B cell (primary cell): ENCODE measurements at regions of chr19 and their contacts with region 1.

Region 1: DNA sequence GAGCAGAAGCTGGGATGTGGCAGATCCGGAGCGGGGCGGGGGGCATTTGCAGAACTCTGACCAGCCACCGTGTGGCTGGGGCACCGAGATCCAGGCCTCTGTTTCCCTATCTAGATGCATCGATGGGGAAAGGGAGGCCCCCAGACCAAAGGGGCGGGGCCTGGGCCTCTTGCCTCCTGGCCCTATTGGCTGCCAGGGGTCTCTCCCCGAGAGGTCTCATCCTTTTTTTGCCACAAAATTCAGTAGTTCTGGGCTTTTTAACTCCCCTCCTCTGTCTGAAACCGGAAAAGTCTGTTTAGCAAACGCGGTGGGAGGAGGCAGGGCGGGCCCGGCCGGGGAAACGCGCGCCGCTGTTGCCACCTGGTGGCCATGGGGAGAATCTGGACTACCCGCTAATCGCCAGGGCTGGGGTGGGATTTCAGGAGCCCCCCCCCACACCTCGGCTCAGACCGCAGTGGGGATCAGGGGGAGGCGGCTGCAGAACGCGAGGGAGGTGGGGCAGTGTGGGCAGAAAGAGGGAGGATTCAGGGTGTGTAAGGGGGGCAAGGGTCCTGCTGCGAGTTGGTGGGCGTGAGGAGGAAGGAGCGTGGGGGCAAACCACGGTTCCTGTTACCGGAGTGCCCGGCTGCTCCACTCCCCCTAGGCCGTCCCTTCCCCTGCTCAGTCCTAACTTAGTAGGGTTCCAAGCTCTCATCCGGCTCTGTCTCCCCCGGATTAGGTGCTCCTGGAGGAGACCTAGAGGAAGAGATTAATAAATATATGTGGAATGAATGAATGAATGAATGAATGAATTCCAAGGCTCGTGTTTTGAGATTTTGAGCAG is 28.3 kb downstream of the IL12RB1 start:
- DNase-seq: peak; percentile 90
- ATAC-seq: peak; percentile 96
- H3K4me3 ChIP-seq: peak overlapping the region in 3 of 5 experiments; percentile 21 to 23 (median 23)
- H3K4me3 Mint-ChIP-seq: peak overlapping the region; percentile 65
- H3K27ac ChIP-seq: peak overlapping the region; percentile 67 to 71
- H3K27ac Mint-ChIP-seq: peak overlapping the region; percentile 89
- H3K4me1 ChIP-seq: peaks cover 11 to 13% of the 10 kb centered on the region in 2 donors
- H3K4me1 Mint-ChIP-seq: peaks cover 20% of the 10 kb centered on the region
- H3K27me3 ChIP-seq: no peaks in the 10 kb centered on the region
- H3K27me3 Mint-ChIP-seq: no peaks in the 10 kb centered on the region
- CTCF ChIP-seq: peak; percentile 96

Region 2: GRCh38 chr19:17938092-17938845 is 120.2 kb before region 1 on chr19:
- CTCF ChIA-PET with region 1: interaction called, 33 read pairs
- POLR2A ChIA-PET with region 1: interaction called, 4 read pairs
- intact Hi-C with region 1: loop called (anchors 1 kb)
- DNase-seq: peak; percentile 88
- ATAC-seq: peak; percentile 98
- H3K4me3 ChIP-seq: no peak overlapping the region
- H3K4me3 Mint-ChIP-seq: no peak overlapping the region
- H3K27ac ChIP-seq: no peak overlapping the region
- H3K27ac Mint-ChIP-seq: peak overlapping the region; percentile 41
- H3K4me1 ChIP-seq: peaks cover 5 to 10% of the 10 kb centered on the region in 2 donors
- H3K4me1 Mint-ChIP-seq: peaks cover 11% of the 10 kb centered on the region
- H3K27me3 ChIP-seq: no peaks in the 10 kb centered on the region
- H3K27me3 Mint-ChIP-seq: no peaks in the 10 kb centered on the region
- CTCF ChIP-seq: peak; percentile 94

Region 3: DNA sequence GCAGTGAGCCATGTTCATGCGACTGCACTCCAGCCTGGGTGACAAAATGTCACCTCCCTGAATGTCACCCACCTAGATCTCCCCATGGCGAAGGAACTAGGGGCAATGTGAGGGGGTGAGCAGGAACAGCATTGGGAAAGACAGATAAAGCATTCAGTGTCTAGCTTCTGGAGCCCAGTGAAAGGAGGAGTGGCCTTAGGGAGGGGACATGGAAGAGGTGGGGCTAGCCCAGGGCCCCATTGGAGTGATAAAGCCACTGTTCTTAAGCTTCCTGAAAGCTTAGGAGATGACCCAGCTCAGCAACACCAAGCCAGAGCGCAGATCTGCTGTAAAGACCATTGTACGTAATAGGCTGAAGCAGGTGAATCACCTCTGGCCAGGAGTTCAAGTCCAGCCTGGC is 104.5 kb before region 1 on chr19:
- CTCF ChIA-PET with region 1: no interaction called
- POLR2A ChIA-PET with region 1: no interaction called
- intact Hi-C with region 1: no loop called
- DNase-seq: no peak
- ATAC-seq: no peak
- H3K4me3 ChIP-seq: no peak overlapping the region
- H3K4me3 Mint-ChIP-seq: no peak overlapping the region
- H3K27ac ChIP-seq: no peak overlapping the region
- H3K27ac Mint-ChIP-seq: no peak overlapping the region
- H3K4me1 ChIP-seq: peaks cover 44 to 49% of the 10 kb centered on the region in 2 donors
- H3K4me1 Mint-ChIP-seq: peaks cover 37% of the 10 kb centered on the region
- H3K27me3 ChIP-seq: peaks cover 0 to 76% (median 42%) of the 10 kb centered on the region in 4 experiments
- H3K27me3 Mint-ChIP-seq: peaks cover 41% of the 10 kb centered on the region
- CTCF ChIP-seq: no peak

Region 4: DNA sequence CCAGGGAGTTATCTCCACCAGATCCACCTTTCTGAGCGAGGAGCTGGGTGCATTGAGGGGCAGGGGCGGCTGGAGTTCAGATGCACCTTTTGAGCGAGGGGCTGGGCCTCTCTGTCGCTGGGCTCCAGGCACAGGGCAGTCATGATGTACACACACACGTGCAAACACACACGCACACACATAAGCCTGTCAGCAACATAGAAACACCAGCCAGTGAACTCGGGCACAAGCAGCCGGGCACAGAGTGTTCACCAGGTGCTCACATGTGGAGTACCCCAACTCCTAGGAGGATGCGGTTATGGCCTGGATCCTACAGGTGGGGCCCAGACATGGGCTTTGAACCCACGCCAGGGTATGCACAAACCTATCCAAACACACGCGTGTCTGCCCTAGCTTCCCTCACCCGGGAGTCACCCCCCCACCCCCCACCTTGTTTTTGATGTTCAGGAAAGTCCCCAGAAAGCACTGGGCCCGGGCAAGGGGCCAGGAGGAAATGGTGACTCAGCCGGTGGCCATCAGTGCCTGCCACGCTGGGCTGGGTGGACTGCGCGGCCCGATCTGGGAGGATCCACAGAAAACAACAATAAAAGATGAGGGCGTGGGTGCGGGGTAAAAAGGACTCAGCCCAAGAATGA is 37.2 kb before region 1 on chr19:
- CTCF ChIA-PET with region 1: interaction called, 345 read pairs
- POLR2A ChIA-PET with region 1: interaction called, 41 read pairs
- intact Hi-C with region 1: loop called (anchors 1 kb)
- DNase-seq: peak; percentile 84
- ATAC-seq: peak; percentile 22
- H3K4me3 ChIP-seq: peak overlapping the region in 2 of 5 experiments; percentile 18 to 35
- H3K4me3 Mint-ChIP-seq: peak overlapping the region; percentile 79
- H3K27ac ChIP-seq: peak overlapping the region; percentile 95 to 99
- H3K27ac Mint-ChIP-seq: peak overlapping the region; percentile 98
- H3K4me1 ChIP-seq: peaks cover 51 to 64% of the 10 kb centered on the region in 2 donors
- H3K4me1 Mint-ChIP-seq: peaks cover 68% of the 10 kb centered on the region
- H3K27me3 ChIP-seq: no peaks in the 10 kb centered on the region
- H3K27me3 Mint-ChIP-seq: no peaks in the 10 kb centered on the region
- CTCF ChIP-seq: no peak

Region 5: GRCh38 chr19:18109733-18110595 is 51.5 kb after region 1 on chr19:
- CTCF ChIA-PET with region 1: interaction called, 9 read pairs
- POLR2A ChIA-PET with region 1: no interaction called
- intact Hi-C with region 1: loop called (anchors 5 kb)
- DNase-seq: peak; percentile 61
- ATAC-seq: peak; percentile 48
- H3K4me3 ChIP-seq: peak overlapping the region; percentile 22 to 71 (median 64)
- H3K4me3 Mint-ChIP-seq: peak overlapping the region; percentile 79
- H3K27ac ChIP-seq: peak overlapping the region; percentile 49 to 82
- H3K27ac Mint-ChIP-seq: peak overlapping the region; percentile 84
- H3K4me1 ChIP-seq: peaks cover 53 to 65% of the 10 kb centered on the region in 2 donors
- H3K4me1 Mint-ChIP-seq: peaks cover 65% of the 10 kb centered on the region
- H3K27me3 ChIP-seq: no peaks in the 10 kb centered on the region
- H3K27me3 Mint-ChIP-seq: no peaks in the 10 kb centered on the region
- CTCF ChIP-seq: no peak